Tibial artery (tissue), 4 donors: ENCODE measurements at regions of chr19 and their contacts with region 1.

Region 1: DNA sequence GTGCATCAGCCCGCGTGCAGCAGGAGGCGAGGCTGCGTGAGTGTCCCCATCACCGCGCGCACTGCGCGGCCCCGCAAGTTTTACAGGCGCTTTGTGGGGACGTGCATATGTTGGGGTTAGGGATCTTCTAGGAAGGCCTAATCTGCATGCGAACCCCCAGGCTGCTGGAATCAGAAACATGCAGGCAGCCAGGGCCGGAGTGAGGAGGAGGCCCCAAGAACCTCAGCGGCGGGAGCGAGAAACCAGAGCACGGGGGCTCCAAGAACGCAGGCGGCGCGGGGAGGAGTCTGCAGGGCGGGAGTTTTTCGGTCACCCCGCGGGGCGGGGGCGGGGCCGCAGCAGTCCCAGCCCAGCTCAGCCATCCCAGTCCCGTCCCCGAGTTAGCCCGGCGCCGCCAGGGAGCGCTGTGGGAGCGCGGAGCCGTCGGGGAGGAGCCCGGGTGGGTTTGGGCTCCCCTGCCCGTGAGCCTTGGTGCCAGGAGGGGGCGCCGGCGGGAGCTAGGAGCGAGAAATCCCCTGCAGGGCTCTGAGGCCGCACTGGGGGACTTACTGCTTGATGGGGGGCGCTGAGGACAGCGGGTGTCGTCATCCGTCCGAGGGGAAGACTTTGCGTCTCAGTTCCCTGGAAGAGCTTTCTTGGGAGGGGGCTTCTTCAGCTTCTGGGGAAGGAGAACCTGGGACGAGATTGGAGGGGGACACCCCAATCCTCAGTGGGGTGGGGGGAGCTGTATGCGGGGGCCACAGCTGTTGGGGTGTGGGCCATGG is 933 bp upstream of the NRTN start:
- DNase-seq: peak; percentile 73 to 82
- H3K4me3 ChIP-seq: peak overlapping the region in 1 of 2 donors; percentile 2
- H3K27ac ChIP-seq: no peak overlapping the region
- H3K4me1 ChIP-seq: peaks cover 0 to 20% (median 7%) of the 10 kb centered on the region in 4 donors
- H3K27me3 ChIP-seq: peaks cover 0 to 88% of the 10 kb centered on the region in 2 donors
- CTCF ChIP-seq: peak; percentile 49 to 59

Region 2: DNA sequence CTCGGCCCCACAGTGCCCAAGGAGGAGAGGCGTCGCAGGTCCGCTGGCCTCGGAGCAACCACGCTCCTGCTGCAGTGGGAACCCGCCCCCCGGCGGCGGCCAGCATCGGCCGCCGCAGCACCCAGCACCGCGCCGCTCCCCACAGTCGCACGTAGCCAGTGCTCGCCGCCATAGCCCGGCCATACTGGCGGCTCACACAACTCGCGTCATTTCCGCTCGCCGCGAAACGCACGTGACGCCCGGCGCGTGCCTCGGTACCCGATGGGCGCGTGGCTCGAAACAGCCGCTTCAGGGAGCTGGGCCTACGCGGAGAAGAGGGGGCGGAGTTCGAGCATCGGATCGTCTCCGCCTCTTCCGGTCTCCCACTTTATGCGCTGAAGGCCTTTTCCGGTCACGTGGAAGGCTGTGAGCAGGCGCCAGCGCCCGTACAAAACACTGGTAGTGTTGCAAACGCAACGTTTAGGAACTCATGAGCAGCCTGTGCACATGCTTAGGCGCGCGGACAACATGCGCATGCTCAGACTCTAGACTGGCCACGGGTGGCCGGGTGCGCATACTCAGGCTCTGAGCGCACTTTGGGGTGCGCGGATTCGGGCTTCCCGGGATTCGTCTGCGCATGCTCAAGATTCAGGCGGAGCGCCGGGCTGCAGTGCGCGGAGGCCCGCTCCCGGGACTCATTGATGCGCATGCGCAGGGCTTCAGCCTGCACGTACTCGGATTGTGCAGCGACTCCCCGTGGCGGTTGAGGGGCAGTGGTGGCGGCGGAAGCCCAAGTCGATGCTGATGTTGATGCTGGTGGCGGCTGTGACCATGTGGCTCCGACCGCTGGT is 83.8 kb before region 1 on chr19 and contains the starts of genes CATSPERD and LONP1:
- intact Hi-C with region 1: no loop called
- DNase-seq: peak; percentile 97 to 99
- H3K4me3 ChIP-seq: peak within 1 kb of the TSS; percentile 73 to 94
- H3K27ac ChIP-seq: peak within 1 kb of the TSS; percentile 93 to 97
- H3K4me1 ChIP-seq: peaks cover 0 to 31% (median 21%) of the 10 kb centered on the region in 4 donors
- H3K27me3 ChIP-seq: no peaks in the 10 kb centered on the region
- CTCF ChIP-seq: peak; percentile 91 to 94

Region 3: DNA sequence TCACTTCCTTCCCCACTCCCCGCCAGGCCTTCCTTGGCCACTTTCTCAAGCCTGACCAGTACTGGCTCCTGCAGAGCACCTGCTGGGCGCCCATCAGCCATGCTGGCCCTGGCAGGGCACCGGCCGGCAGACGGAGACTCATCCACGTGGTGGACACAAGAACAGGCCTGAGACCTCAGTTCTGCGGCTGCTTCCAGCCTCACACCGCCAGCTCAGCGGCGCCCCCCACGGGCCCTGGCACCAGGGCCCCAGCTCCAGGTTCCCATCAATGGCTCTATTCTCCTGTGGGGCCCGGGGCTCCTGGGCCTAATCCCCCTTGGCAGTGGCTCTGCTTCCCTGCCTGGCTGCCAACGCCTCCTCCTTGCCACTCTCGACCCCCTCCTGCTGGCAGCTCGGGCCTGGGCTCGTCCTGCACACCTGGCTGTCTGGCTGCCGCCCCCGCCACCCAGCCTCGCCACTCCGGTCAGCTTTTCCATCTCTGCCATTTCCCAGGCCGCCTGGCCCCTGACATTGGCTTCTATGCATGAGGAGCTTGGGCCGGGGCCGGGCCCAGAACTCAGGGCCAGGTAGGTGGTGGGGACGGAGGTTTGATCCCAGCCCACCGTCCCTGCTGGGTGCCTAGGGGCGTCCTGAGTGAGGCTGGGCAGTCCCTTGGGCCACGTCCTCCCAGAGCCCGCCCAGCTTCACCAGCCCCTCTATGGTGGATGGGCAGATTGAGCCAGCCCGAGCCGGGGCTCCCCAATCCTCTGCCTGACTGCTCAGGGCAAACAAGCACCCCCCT is 93.4 kb after region 1 on chr19:
- intact Hi-C with region 1: loop called (anchors 2 kb)
- DNase-seq: no peak
- H3K4me3 ChIP-seq: no peak overlapping the region
- H3K27ac ChIP-seq: no peak overlapping the region
- H3K4me1 ChIP-seq: peaks cover 0 to 43% (median 23%) of the 10 kb centered on the region in 4 donors
- H3K27me3 ChIP-seq: peaks cover 0 to 6% of the 10 kb centered on the region in 2 donors
- CTCF ChIP-seq: no peak

Region 4: GRCh38 chr19:6092329-6093286 is 288.7 kb after region 1 on chr19:
- intact Hi-C with region 1: no loop called
- DNase-seq: peak; percentile 90 to 96
- H3K4me3 ChIP-seq: peak overlapping the region; percentile 41 to 50
- H3K27ac ChIP-seq: peak overlapping the region; percentile 92 to 94
- H3K4me1 ChIP-seq: peaks cover 0 to 55% (median 38%) of the 10 kb centered on the region in 4 donors
- H3K27me3 ChIP-seq: no peaks in the 10 kb centered on the region
- CTCF ChIP-seq: peak; percentile 34 to 57